Tibial artery (tissue), 4 donors: ENCODE measurements at regions of chr7 and their contacts with region 1.

Region 1: GRCh38 chr7:153422291-153423209 is 629.6 kb upstream of the DPP6 start:
- DNase-seq: no peak
- H3K4me3 ChIP-seq: no peak overlapping the region
- H3K27ac ChIP-seq: no peak overlapping the region
- H3K4me1 ChIP-seq: no peaks in the 10 kb centered on the region
- H3K27me3 ChIP-seq: no peaks in the 10 kb centered on the region
- CTCF ChIP-seq: no peak

Region 2: GRCh38 chr7:153470004-153470671 is 47.6 kb after region 1 on chr7:
- intact Hi-C with region 1: loop called (anchors 2 kb)
- DNase-seq: no peak
- H3K4me3 ChIP-seq: no peak overlapping the region
- H3K27ac ChIP-seq: no peak overlapping the region
- H3K4me1 ChIP-seq: no peaks in the 10 kb centered on the region
- H3K27me3 ChIP-seq: no peaks in the 10 kb centered on the region
- CTCF ChIP-seq: no peak

Region 3: DNA sequence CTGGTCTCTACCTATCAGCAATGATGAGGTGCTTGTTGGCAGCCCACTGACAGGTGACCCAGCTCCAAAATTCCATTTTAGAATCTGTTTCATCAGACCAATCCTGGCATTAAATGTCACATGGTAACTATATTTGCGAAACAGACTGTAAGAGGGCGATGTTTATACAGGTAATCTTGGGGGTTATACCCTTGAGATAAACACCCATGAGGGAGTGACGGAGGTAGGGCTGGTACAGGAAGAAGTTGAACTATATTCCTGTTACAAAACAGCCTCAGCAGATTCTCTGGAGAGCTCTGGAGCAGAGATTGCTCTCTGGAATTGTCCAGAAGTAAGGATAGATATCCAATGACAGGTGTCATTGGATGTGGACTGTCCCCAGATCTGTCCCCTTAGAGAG is 184.8 kb after region 1 on chr7:
- intact Hi-C with region 1: no loop called
- DNase-seq: no peak
- H3K4me3 ChIP-seq: no peak overlapping the region
- H3K27ac ChIP-seq: no peak overlapping the region
- H3K4me1 ChIP-seq: no peaks in the 10 kb centered on the region
- H3K27me3 ChIP-seq: no peaks in the 10 kb centered on the region
- CTCF ChIP-seq: no peak